Activated B cell treated with CpG ODN at 0.5 μM for 24 hours (primary cell): ENCODE measurements at regions of chr17 and their contacts with region 1.

Region 1: DNA sequence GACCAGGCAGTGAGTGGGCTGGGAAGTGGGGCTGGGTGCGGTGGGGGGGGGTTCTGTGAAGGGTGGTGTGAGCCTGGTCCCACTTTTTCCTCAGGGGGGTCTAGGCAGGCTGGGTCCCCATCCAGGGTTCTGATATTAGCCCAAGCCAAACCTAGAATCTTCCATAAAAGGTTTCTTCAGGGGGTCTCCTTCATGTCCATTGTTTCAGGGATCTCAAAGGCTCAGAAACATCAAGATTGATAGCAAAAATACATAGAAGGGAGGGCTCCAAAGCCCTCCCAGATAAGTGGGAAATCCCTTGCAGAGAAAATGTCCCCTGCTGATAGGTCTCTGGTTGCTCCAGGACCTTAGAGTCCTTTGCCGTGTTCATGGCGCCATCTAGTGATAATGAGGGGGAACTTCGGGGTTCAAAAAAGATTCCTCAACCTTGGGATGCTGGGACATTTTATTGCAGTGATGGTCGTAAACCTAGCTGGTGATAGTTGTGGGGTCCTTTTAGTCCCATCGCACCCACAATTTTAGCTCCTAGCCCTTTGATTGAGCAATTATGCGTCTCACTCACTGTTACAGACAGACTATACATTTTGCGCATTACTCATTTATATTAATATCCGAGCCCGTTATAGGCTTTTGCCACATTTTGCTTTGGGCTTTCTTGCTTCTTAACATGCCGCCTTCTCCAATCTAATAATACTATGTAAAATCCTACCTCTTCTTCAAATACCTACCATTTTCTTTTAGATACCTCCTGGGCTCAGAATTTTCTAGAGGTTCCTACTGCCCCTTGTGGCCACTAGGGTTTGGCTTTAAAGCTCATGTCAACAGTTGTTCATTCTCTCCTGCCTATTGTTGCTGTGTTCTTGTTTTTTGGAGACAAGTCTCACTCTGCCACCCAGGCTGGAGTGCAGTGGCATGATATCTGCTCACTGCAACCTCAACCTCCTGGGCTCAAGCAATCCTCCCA is 35.1 kb downstream of the IGF2BP1 start:
- DNase-seq: no peak
- ATAC-seq: peak; percentile 80
- H3K4me3 Mint-ChIP-seq: no peak overlapping the region
- H3K27ac Mint-ChIP-seq: no peak overlapping the region
- H3K4me1 Mint-ChIP-seq: peaks cover 6% of the 10 kb centered on the region
- H3K27me3 Mint-ChIP-seq: peaks cover 6% of the 10 kb centered on the region
- CTCF ChIP-seq: no peak

Region 2: DNA sequence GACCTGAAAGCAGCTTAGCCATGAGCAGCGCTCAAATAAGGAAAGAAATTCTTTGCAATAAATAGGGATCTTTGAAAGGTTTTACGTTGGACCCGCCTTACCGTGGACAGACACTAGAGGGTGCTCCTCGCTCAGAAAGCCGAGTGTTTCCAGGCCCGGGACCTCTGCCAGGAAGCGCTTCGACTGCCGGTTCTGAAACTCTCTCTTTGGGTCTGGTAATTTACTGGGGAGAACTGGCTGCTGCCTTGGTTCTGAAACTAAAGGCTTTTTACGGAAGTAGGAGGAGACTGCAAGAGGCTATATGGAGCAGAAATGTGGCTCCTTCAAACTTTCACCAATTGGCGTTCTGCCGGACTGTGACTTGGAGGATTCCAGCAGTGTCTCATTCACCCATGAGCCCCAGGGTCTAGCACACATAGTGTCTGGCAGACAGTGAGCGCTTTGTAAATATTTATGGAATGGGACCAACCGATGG is 360.5 kb before region 1 on chr17:
- CTCF ChIA-PET with region 1: interaction called, 4 read pairs
- POLR2A ChIA-PET with region 1: no interaction called
- intact Hi-C with region 1: loop called (anchors 1 kb)
- DNase-seq: peak; percentile 48
- ATAC-seq: peak; percentile 71
- H3K4me3 Mint-ChIP-seq: peak overlapping the region; percentile 35
- H3K27ac Mint-ChIP-seq: no peak overlapping the region
- H3K4me1 Mint-ChIP-seq: peaks cover 5% of the 10 kb centered on the region
- H3K27me3 Mint-ChIP-seq: peaks cover 39% of the 10 kb centered on the region
- CTCF ChIP-seq: peak; percentile 34

Region 3: DNA sequence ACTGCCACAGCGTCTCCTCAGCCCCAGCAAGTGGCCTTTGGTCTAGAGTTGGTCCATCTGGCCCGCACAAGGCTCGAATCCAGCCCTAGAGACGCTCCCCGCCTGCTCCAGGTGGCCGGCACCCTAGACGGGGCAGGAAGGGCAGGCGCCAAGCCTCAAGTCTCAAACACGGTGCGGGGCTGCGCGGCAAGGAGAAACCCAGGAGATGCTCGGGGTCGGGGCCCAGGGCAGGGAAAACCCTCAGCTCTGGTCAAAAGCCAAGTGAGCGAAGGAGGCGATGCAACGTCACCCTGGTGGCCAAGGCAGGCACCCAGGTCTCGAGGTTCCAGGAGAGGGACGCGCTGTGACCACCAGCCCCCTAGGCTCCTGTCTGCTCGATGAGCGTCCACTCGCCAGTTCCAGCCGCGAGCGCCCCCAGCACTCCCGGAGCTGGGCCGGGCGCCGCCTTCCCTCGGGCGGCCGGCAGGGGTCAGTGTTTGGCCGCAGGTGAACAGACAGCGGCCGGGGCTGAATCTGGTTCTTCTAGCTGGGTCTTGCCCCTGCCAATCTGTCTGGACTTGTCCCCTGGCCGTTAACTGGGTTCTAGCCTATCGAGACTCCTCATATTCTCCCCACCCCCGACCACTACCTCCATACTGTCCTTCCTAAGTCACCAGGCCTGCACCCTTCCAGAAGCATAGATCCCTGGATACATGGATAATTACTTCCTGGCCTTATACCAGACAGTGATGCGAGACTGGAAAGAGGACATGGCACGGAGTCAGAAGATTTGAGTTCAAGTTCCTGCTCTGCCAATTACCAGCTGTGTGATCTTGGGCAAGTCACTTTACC is 353.9 kb before region 1 on chr17:
- CTCF ChIA-PET with region 1: interaction called, 13 read pairs
- POLR2A ChIA-PET with region 1: no interaction called
- intact Hi-C with region 1: loop called (anchors 1 kb)
- DNase-seq: peak; percentile 67
- ATAC-seq: peak; percentile 92
- H3K4me3 Mint-ChIP-seq: peak overlapping the region; percentile 35
- H3K27ac Mint-ChIP-seq: no peak overlapping the region
- H3K4me1 Mint-ChIP-seq: peaks cover 2% of the 10 kb centered on the region
- H3K27me3 Mint-ChIP-seq: peaks cover 34% of the 10 kb centered on the region
- CTCF ChIP-seq: peak; percentile 88

Region 4: GRCh38 chr17:48724251-48725003 is 307.8 kb before region 1 on chr17:
- CTCF ChIA-PET with region 1: interaction called, 4 read pairs
- POLR2A ChIA-PET with region 1: no interaction called
- intact Hi-C with region 1: loop called (anchors 1 kb)
- DNase-seq: peak; percentile 57
- ATAC-seq: peak; percentile 75
- H3K4me3 Mint-ChIP-seq: peak overlapping the region; percentile 67
- H3K27ac Mint-ChIP-seq: peak overlapping the region; percentile 63
- H3K4me1 Mint-ChIP-seq: peaks cover 37% of the 10 kb centered on the region
- H3K27me3 Mint-ChIP-seq: peaks cover 80% of the 10 kb centered on the region
- CTCF ChIP-seq: no peak

Region 5: GRCh38 chr17:48804925-48805411 is 227.3 kb before region 1 on chr17:
- CTCF ChIA-PET with region 1: interaction called, 7 read pairs
- POLR2A ChIA-PET with region 1: no interaction called
- intact Hi-C with region 1: loop called (anchors 1 kb)
- DNase-seq: peak; percentile 57
- ATAC-seq: peak; percentile 96
- H3K4me3 Mint-ChIP-seq: no peak overlapping the region
- H3K27ac Mint-ChIP-seq: no peak overlapping the region
- H3K4me1 Mint-ChIP-seq: peaks cover 4% of the 10 kb centered on the region
- H3K27me3 Mint-ChIP-seq: peaks cover 23% of the 10 kb centered on the region
- CTCF ChIP-seq: peak; percentile 26

Region 6: DNA sequence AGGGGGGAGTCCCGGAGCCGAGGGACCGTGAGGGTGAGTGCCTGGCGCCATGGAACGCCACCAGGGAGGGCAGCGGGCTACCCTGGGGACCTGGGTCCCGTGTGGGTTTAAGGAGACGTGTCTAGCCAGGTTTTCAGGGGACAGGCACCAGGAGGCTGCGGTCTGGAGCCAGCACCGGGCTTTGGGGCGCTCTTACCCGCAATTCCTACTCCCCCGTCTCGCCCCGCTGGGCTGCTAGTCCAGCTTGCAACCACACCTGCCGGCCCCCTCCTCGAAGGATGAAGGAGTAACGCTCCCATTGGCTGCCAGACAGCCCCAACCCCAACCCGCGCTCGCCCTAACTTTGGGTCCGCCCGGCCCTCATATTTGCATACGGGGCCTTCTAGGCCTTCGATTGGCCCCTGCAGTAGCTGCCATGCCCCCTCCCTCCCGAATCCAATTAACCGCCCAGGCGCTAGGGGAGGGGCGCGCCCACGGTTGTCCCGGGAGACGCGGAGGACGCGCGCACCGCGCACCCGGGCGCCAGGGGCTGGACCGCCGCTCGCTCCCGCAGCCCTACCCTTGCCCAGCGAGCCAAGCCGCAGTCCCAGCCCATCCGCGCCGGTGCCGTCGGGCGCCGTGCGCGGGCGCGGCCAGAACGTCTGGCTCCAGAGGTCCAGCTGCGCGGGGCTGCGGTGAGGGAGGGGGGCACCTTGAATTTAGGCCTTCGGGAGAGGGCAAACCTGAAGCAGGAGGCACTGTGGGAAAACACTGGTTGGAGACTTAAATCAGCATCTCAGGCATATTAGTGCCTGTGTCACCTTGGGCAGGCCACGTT is 215.3 kb before region 1 on chr17 and contains the start of gene TTLL6:
- CTCF ChIA-PET with region 1: interaction called, 14 read pairs
- POLR2A ChIA-PET with region 1: no interaction called
- intact Hi-C with region 1: loop called (anchors 1 kb)
- DNase-seq: peak; percentile 57
- ATAC-seq: peak; percentile 96
- H3K4me3 Mint-ChIP-seq: peak within 1 kb of the TSS; percentile 84
- H3K27ac Mint-ChIP-seq: no peak within 1 kb of the TSS
- H3K4me1 Mint-ChIP-seq: peaks cover 18% of the 10 kb centered on the region
- H3K27me3 Mint-ChIP-seq: peaks cover 26% of the 10 kb centered on the region
- CTCF ChIP-seq: no peak
- total RNA-seq, gene TTLL6: not detected in 2 replicates

Region 7: DNA sequence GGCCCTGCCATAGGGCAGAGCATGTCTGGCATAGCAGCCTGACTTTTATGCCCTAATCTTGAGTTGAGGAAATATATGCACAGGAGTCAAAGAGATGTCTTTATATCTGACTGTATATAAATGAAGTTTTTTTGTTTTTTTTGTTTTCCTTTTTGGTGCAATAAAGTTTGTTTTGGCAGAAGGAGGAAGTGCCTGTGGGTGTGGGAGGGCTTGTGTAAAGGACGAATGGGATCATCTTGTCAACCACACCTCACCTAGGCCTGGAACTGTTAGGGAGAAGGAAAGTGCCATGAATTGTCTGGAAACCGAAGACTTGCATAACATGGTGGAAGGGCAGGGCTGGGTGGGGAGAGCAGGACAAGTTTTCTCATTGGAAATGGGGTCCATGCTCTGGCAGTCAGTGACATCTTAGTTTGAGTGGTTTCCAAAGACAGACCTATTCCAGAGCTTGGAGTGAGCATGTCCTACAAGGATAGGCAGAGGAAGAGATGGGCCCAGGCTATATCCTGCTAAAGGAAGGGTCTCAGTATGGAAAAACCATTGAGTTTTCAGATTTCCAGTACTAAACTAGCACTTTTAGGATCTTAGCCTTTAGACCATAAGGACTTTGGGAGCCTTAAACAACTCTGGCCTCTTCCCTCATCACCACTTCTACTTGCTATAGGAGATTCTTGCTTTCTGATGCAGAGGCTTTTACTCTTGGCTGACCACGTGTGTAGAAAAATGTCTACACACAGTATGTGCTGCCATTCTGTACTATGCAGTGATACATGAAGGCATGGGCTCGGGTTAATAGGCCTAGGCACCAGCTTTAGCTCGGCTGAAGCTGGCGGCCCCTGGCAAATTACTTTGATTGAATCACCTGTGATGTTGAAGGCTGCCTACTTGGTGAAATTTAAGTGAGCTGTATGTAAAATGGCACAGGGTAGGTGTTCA is 103.1 kb before region 1 on chr17:
- CTCF ChIA-PET with region 1: no interaction called
- POLR2A ChIA-PET with region 1: no interaction called
- intact Hi-C with region 1: loop called (anchors 1 kb)
- DNase-seq: no peak
- ATAC-seq: no peak
- H3K4me3 Mint-ChIP-seq: no peak overlapping the region
- H3K27ac Mint-ChIP-seq: peak overlapping the region; percentile 64
- H3K4me1 Mint-ChIP-seq: no peaks in the 10 kb centered on the region
- H3K27me3 Mint-ChIP-seq: no peaks in the 10 kb centered on the region
- CTCF ChIP-seq: no peak